ENCODE measurements at regions of chr1 and their contacts with region 1.

Region 1: GRCh38 chr1:184260382-184260781 is 126.4 kb upstream of the C1orf21 start:
- DNase-seq: peak; percentile 55
- H3K4me3 ChIP-seq: no peak overlapping the region
- H3K27ac ChIP-seq: no peak overlapping the region
- H3K4me1 ChIP-seq: no peaks in the 10 kb centered on the region
- H3K27me3 ChIP-seq: no peaks in the 10 kb centered on the region
- CTCF ChIP-seq: no peak

Region 2: DNA sequence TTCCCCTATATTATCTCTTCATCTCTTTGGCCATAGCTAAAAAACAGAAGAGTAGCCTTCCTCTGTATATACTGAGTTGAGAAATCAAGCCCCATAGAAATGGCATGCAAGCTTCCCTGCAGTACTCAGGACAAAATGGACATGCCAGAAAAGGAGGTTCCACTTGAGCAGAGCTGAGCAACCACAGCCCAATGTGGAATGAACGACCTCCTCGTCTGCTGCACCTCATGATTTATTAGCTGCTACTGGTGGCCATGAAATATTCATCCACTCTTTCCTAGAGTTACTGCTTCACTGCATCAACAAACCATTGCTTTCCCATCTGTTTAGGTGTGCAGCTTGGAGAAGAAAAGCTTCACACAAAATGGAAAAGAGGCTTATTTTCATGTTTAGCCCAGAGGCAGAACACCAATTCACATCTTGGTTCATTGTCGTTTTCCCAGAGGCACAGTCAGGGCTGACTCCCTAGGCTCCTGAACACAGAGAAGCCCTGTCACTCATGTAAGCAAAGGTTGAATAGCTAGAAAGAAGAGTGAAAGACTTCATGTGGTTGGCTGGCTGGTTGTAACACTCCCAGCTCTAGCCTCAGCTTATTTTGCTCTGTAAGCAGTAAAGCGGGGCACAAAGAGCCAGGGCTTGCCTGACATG is 60.8 kb before region 1 on chr1:
- CTCF ChIA-PET with region 1: interaction called, 18 read pairs
- dilution Hi-C with region 1: no loop called
- in situ Hi-C with region 1: no loop called
- intact Hi-C with region 1: no loop called
- DNase-seq: no peak
- H3K4me3 ChIP-seq: no peak overlapping the region
- H3K27ac ChIP-seq: no peak overlapping the region
- H3K4me1 ChIP-seq: no peaks in the 10 kb centered on the region
- H3K27me3 ChIP-seq: no peaks in the 10 kb centered on the region
- CTCF ChIP-seq: no peak

Region 3: GRCh38 chr1:184836934-184837895 is 576.8 kb after region 1 on chr1:
- CTCF ChIA-PET with region 1: no interaction called
- dilution Hi-C with region 1: no loop called
- in situ Hi-C with region 1: no loop called
- intact Hi-C with region 1: no loop called
- DNase-seq: no peak
- H3K4me3 ChIP-seq: no peak overlapping the region
- H3K27ac ChIP-seq: no peak overlapping the region
- H3K4me1 ChIP-seq: peaks cover 10% of the 10 kb centered on the region
- H3K27me3 ChIP-seq: no peaks in the 10 kb centered on the region
- CTCF ChIP-seq: no peak